ENCODE measurements at regions of chr3 and their contacts with region 1.

Region 1: DNA sequence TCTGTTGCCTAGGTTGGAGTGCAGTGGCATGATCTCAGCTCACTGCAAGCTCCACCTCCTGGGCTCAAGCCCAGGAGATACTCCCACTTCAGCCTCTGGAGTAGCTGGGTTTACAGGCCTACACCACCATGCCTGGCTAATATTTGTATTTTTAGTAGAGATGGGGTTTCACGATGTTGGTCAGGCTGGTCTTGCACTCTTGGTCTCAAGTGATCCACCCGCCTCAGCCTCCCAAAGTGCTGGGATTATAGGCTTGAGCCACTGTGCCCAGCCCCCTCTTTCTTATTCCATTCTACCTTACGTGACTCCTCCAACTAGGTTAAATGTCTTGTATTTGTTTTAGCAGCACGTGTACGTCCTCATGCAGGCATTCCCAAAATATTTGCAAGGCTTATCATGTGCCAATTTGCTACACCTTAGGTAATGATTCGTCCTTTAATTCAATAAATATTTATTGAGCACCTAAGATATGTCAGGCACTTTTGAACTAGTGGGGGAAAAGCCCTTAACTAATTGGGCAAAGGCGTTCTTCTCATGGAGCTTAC is 14.9 kb upstream of the MAGI1 start:
- DNase-seq: no peak
- ATAC-seq: peak; percentile 94

Region 2: DNA sequence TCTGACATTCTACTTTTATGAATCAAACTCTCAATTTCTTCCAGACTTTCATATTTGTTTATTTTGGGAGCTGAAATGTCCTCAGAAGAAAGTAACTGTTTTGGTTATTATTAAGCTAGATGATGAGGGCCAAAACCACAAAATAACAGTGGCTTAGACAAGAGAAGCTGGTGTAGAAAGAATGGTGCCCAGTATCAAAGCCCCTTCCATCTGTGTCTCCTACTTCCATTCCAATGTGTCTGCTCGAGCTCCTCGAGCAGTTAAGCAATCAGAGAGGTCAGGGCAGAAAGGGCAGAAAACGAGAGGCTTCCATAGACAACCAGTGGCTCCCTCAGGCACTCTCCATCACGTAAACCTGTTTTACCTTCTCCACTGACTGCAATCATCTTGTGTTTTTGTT is 44.8 kb after region 1 on chr3:
- intact Hi-C with region 1: loop called (anchors 1 kb)
- DNase-seq: no peak
- ATAC-seq: no peak